ENCODE measurements at regions of chr10 and their contacts with region 1.

Region 1: DNA sequence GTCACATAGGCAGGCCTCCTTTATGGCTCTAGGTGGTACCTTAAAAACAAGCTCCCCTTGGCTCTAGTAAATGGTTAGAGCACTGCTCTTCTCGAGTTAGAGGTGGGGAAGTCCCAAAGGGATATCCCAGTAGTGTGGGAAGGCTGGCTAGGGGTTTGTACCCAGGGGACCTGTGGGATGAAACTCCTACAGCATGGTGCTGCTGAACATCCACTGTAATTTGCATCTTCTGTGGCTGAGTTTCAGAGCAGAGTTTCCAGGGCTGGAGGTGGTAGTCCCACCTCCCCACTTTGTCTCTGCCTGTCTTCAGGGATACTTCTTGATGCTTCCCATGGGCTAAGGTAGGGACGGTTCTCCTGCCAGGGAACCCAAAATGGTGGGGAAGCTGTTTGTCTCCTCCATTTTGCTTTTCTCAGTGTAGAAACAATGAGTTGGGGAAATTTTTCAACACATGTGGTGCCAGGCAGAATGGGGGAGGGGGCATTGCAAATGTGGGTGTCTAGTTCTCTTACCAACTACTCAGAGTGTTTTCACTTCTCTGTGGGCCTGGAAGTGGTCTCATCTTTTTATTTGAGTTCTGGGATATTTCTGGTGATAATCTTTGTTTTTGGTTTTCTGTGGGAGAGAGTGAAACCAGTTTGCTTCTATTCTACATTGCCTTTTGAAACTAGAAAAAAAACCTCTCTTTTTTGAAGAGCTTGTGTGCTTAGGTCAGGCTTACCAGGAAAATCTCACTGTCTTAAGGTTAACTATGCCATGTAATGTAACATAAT is 36.3 kb downstream of the SCART1 start:
- DNase-seq: no peak
- H3K4me3 ChIP-seq: no peak overlapping the region
- H3K27ac ChIP-seq: no peak overlapping the region
- H3K4me1 ChIP-seq: no peaks in the 10 kb centered on the region
- H3K27me3 ChIP-seq: no peaks in the 10 kb centered on the region
- CTCF ChIP-seq: no peak
- POLR2A ChIP-seq: no peak

Region 2: GRCh38 chr10:133329491-133330202 is 160.4 kb before region 1 on chr10:
- intact Hi-C with region 1: loop called (anchors 5 kb)
- DNase-seq: peak; percentile 81 to 86
- H3K4me3 ChIP-seq: no peak overlapping the region
- H3K27ac ChIP-seq: no peak overlapping the region
- H3K4me1 ChIP-seq: peaks cover 6 to 17% of the 10 kb centered on the region in 2 donors
- H3K27me3 ChIP-seq: peaks cover 15% of the 10 kb centered on the region
- CTCF ChIP-seq: peak; percentile 68 to 99 (median 86)
- POLR2A ChIP-seq: no peak

Region 3: DNA sequence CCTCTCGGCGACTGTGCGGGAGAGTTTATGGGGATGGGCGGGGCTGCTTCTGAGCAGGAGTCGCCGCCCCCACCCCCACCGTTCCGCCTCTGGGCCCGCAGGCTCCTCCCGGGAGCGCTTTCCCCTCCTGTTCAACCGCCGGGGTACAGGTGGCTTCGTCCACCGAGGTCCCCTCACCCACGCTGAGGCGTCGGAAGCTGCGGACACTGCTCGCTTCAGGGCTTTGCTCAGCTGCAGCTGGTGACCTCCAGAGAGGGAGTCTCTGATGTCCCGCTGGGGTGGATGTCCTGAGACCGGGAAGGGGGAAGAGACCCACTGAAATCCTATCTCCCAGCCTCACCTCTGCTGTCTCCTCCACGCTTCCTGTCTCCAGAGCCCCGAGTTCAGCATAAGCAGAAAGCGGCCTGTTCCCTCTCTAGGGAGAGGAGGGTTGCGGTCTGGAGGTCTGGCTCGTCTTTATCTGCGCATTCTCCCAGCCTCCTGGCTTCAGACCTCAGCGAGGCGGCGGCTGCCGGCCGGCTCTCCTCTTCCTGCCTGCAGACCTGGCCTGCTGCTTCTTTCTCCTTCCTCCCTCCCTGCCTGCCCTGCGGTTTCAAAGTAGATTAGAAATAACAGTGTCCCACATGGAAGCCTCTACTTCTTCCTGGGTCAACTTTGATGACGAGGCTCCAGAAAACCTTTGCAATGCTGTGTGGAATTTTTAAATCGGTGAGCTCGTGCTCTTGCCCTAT is 39.0 kb after region 1 on chr10:
- intact Hi-C with region 1: no loop called
- DNase-seq: no peak
- H3K4me3 ChIP-seq: no peak overlapping the region
- H3K27ac ChIP-seq: no peak overlapping the region
- H3K4me1 ChIP-seq: peaks cover 0 to 14% of the 10 kb centered on the region in 2 donors
- H3K27me3 ChIP-seq: peaks cover 10% of the 10 kb centered on the region
- CTCF ChIP-seq: no peak
- POLR2A ChIP-seq: no peak